CD4-positive, alpha-beta T cell (primary cell): ENCODE measurements at regions of chr12 and their contacts with region 1.

Region 1: DNA sequence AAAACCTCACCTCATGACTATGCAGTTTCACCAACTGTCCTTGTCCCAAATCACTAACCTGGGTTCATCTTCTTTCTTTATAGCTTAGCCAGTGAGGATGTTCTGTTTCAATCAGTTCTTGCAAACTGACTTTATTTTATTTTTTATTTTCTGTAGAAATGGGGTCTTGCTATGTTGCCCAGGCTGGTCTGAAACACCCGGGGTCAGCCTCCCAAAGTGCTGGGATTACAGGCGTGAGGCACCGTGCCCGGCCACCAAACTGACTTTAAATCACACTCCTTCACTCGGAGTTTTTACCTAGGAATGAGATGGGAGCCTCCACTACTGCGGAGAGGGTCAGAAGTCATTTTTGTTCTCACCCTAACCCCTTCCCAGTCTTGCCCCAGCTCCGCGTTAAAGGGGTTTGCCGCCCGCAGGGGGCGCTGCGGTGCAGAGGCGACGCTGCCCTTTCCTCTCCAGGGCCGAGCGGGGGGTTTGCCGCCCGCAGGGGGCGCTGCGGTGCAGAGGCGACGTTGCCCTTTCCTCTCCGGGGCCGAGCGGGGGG is 7.0 kb upstream of the B4GALNT3 start:
- DNase-seq: peak; percentile 21 to 70 (median 39)
- ATAC-seq: peak; percentile 30
- H3K4me3 ChIP-seq: no peak overlapping the region
- H3K4me3 Mint-ChIP-seq: no peak overlapping the region
- H3K27ac ChIP-seq: no peak overlapping the region
- H3K27ac Mint-ChIP-seq: no peak overlapping the region
- H3K4me1 ChIP-seq: peaks cover 4% of the 10 kb centered on the region
- H3K4me1 Mint-ChIP-seq: no peaks in the 10 kb centered on the region
- H3K27me3 ChIP-seq: peaks cover 0 to 10% of the 10 kb centered on the region in 2 experiments
- H3K27me3 Mint-ChIP-seq: no peaks in the 10 kb centered on the region
- CTCF ChIP-seq: no peak

Region 2: DNA sequence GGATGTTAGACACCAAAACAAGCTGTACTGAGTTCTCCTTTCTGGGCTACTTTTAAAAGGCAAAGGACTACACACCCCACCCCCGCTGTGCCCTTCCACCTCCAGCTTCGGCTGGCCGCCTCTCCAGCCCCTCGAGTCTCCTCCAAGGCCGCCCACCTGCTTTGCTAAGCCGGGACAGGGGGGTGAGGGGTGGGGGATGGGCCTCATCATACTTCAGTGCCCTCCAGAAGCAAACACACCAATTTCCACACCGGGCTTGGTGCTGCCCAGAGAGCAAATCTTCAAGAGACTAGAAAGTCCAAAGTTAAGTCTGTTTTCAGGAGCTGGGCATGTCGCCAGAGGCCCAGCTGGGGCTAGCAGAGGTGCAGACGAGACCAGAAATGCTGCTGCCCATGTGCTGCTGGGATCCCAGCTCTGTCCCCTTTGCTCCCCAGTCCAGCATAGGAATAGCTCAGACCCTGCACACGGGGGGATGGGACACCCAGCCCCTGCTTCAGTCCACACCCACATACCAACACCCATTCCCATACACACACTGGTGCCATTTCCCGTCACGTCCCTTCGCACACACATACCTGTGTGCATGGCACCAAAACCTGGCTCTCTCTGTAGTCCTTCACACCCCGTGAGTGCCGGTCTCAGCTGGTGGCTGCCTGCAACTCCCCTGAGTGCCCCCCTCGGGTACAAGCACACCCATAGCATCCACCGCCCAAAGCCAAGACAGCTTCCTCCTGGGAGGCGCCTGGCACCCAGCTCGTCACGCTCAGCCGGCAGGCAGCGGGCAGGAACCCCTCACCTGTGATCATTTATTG is 239.8 kb before region 1 on chr12:
- CTCF ChIA-PET with region 1: no interaction called
- POLR2A ChIA-PET with region 1: no interaction called
- intact Hi-C with region 1: no loop called
- DNase-seq: no peak
- ATAC-seq: no peak
- H3K4me3 ChIP-seq: no peak overlapping the region
- H3K4me3 Mint-ChIP-seq: no peak overlapping the region
- H3K27ac ChIP-seq: no peak overlapping the region
- H3K27ac Mint-ChIP-seq: no peak overlapping the region
- H3K4me1 ChIP-seq: no peaks in the 10 kb centered on the region
- H3K4me1 Mint-ChIP-seq: no peaks in the 10 kb centered on the region
- H3K27me3 ChIP-seq: peaks cover 14 to 31% of the 10 kb centered on the region in 2 experiments
- H3K27me3 Mint-ChIP-seq: peaks cover 52% of the 10 kb centered on the region
- CTCF ChIP-seq: no peak

Region 3: GRCh38 chr12:442235-442884 is 10.4 kb before region 1 on chr12:
- CTCF ChIA-PET with region 1: interaction called, 15 read pairs
- POLR2A ChIA-PET with region 1: no interaction called
- intact Hi-C with region 1: no loop called
- DNase-seq: peak in 13 of 14 experiments; percentile 13 to 69 (median 37)
- ATAC-seq: peak; percentile 39
- H3K4me3 ChIP-seq: no peak overlapping the region
- H3K4me3 Mint-ChIP-seq: no peak overlapping the region
- H3K27ac ChIP-seq: no peak overlapping the region
- H3K27ac Mint-ChIP-seq: no peak overlapping the region
- H3K4me1 ChIP-seq: no peaks in the 10 kb centered on the region
- H3K4me1 Mint-ChIP-seq: no peaks in the 10 kb centered on the region
- H3K27me3 ChIP-seq: no peaks in the 10 kb centered on the region
- H3K27me3 Mint-ChIP-seq: no peaks in the 10 kb centered on the region
- CTCF ChIP-seq: peak; percentile 90

Region 4: DNA sequence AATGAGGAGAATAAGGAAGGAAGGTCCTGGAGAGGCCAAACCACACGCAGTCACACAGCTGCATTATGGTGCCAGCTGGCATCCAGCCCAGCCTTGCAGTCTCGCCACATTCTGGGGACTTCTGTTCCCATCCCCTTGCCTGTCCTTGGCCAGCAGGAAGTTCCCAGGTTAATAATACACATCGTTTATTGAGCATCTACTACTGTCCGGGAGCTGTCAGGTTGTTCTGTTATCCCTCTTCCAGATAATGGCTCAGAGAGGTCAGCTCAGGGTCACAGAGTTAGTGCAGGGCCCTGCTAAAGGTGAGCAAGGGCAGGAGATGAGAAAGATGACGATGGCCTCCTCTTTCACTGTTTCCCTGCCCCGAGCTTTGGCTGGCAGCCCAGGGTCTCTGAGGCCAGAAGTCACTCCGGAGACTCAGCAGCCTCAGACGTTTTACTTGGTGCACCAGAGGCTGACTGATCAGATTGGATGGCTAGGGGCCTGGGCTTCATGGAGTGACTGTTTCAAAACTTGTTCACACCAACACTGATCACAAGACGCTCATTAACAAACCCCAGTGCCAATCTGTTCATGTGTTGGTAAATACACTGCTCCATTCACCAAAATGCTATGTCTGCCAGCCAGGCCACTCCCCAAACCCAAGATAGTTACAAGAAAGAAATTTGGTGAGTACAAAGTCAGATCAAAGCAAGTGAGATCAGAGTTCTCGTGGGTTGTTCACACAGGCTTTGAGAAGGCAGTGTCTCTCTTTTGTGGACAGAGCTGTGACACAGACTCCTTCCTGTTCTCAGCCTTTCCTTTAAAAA is 86.2 kb after region 1 on chr12:
- CTCF ChIA-PET with region 1: interaction called, 14 read pairs
- POLR2A ChIA-PET with region 1: no interaction called
- intact Hi-C with region 1: no loop called
- DNase-seq: peak in 11 of 14 experiments; percentile 25 to 90 (median 53)
- ATAC-seq: peak; percentile 94
- H3K4me3 ChIP-seq: no peak overlapping the region
- H3K4me3 Mint-ChIP-seq: peak overlapping the region; percentile 32
- H3K27ac ChIP-seq: peak overlapping the region in 1 of 2 donors; percentile 29
- H3K27ac Mint-ChIP-seq: peak overlapping the region; percentile 44
- H3K4me1 ChIP-seq: peaks cover 37% of the 10 kb centered on the region
- H3K4me1 Mint-ChIP-seq: peaks cover 26% of the 10 kb centered on the region
- H3K27me3 ChIP-seq: no peaks in the 10 kb centered on the region
- H3K27me3 Mint-ChIP-seq: no peaks in the 10 kb centered on the region
- CTCF ChIP-seq: no peak

Region 5: DNA sequence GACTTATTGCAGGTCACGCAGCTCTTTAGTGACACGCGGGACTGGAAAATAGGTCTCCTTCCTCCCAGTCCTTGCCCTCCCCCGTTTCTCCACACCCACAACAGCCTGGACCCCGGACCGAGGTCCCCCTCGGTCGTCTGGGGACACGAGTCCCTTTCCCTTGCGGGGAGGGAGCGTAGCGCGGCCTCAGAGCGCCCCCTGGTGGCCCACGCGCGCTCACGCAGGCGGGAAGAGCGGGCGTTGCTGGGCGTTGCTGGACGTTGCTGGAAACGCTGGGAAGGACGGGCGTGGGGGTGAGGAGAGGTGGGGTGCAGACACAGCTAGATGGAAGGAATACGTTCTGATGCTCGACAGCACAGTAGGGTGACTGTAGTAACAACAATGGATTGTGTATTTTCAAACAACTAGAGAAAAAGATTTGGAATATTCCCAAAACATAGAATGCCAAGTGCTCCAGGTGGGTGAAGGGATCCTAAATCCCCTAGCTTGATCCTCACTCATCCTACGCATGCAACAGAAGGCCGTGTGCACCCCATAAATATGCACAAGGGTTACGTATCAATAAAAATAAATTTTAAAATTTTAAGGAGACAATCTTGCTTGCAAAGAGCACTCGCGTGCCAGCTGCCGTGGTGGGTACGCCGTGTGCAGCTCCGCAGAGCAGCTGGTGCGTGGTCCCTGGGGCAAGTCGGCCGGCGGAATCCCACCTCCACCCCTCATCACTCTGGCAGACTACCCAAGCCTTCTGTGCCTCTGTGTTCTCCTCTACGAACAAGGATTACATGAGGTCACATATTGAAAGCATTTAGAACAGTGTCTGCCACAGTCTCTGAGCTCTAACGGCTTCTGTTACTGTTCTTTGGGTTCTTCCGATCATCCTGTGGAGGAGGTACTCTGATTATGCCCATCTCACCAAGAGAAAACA is 94.4 kb after region 1 on chr12:
- CTCF ChIA-PET with region 1: interaction called, 16 read pairs
- POLR2A ChIA-PET with region 1: no interaction called
- intact Hi-C with region 1: loop called in 1 of 2 experiments (anchors 2 kb)
- DNase-seq: peak; percentile 39 to 84 (median 64)
- ATAC-seq: peak; percentile 80
- H3K4me3 ChIP-seq: no peak overlapping the region
- H3K4me3 Mint-ChIP-seq: no peak overlapping the region
- H3K27ac ChIP-seq: no peak overlapping the region
- H3K27ac Mint-ChIP-seq: no peak overlapping the region
- H3K4me1 ChIP-seq: peaks cover 30% of the 10 kb centered on the region
- H3K4me1 Mint-ChIP-seq: peaks cover 47% of the 10 kb centered on the region
- H3K27me3 ChIP-seq: peaks cover 4 to 8% of the 10 kb centered on the region in 2 experiments
- H3K27me3 Mint-ChIP-seq: peaks cover 12% of the 10 kb centered on the region
- CTCF ChIP-seq: peak; percentile 98